GM10248 (cell line): ENCODE measurements at regions of chr9 and their contacts with region 1.

Region 1: GRCh38 chr9:36008774-36009300 is 27.9 kb upstream of the RECK start:
- DNase-seq: peak; percentile 75
- CTCF ChIP-seq: peak; percentile 98

Region 2: DNA sequence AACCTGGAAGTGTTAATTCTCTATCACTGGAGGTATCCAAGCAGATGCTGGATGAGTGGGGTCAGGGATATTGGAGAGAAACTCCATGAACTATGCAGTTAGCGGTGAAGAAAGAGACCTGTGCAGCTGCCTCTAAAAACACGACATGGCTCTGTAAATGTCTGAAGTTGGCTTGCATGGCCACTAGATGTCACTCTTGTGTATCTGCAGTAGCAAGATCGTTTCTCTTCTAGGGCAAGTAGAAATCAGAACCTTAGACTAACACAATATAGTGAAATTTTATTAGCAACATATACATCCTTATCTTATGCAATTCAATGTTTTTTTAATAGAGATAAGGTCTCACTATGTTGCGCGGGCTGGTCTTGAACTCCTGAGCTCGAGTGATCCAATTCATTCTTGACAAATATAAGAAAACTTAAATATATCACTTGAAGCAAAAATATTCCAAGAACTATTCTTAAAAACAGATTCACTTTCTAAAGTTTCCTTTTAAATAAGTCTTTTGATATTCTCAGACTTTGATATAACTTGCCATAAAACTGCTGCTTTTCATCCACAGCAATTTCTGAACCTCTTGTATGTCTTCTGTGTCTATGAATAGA is 53.8 kb before region 1 on chr9:
- CTCF ChIA-PET with region 1: interaction called, 19 read pairs
- POLR2A ChIA-PET with region 1: no interaction called
- DNase-seq: peak; percentile 71
- CTCF ChIP-seq: peak; percentile 80

Region 3: GRCh38 chr9:35976726-35977125 is 32.1 kb before region 1 on chr9:
- CTCF ChIA-PET with region 1: interaction called, 10 read pairs
- POLR2A ChIA-PET with region 1: no interaction called
- DNase-seq: peak; percentile 58
- CTCF ChIP-seq: no peak

Region 4: DNA sequence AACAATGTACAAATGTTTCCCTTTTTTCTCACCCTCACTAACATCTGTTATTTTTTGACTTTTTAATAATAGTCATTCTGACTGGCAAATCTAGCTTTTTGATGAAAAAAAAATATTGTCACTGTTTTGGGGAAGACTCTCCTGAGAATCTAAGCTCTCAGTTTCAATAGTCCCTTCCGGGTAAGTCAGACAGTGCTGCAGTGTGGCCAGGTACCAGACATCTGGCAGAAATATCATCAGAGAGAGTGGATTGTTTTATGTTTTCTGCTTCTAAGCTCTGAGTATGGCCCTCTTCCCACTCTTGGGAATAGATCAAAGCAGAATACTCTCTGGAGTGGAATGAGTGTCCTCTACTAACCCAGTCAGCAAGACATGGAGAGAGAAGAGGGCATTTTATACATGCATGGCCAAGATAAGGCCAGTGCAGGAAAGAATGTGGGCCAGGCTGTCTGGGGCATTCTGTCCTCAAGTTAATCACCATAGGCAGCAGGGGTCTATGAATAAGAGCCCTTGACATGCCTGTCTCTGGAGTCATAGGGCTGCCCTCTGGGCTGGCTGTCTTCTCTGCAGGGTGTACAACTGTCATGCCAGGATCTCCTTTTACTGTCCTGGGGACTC is 12.4 kb before region 1 on chr9:
- CTCF ChIA-PET with region 1: interaction called, 41 read pairs
- POLR2A ChIA-PET with region 1: no interaction called
- DNase-seq: no peak
- CTCF ChIP-seq: no peak

Region 5: DNA sequence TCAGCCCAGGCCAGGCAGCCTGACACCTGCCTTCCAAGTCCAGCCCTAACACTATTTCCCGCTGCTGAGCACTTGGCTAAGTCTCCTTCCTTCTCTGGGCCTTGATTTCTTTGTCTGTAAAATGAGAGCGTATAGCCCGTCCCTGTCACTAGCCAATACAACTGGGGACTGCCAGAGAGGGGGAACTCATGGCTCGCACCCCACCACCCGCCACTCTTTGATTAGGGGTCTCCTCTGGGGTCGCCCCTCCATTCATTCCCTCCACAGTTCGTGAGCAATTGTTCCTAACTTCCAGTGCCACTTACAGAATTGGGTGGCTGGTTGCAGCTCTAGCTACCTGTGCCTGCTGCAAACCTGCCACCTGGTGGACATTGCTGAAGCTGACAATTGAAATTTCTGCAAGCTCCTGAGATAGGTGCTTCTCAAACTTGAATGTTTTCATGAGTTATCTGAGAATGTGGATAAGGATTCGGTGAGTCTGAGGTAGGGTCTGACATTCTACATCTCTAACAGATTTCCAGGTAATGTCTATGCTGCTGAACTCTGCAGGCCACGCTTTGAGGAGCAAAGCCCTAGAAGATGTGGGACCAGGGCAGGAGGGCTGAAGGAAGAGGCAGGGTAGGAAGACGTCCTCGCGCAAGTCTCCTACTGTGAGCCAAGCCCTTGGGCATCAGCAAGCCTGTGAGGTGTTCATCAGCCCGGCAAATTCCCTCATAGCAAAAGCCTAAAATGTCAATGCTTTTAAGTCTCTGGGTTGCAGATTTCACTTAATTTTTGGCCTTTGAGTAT is 14.6 kb after region 1 on chr9:
- CTCF ChIA-PET with region 1: interaction called, 167 read pairs
- POLR2A ChIA-PET with region 1: no interaction called
- DNase-seq: peak; percentile 72
- CTCF ChIP-seq: peak; percentile 84

Region 6: GRCh38 chr9:36029765-36030528 is 21.1 kb after region 1 on chr9:
- CTCF ChIA-PET with region 1: interaction called, 167 read pairs
- POLR2A ChIA-PET with region 1: no interaction called
- DNase-seq: no peak
- CTCF ChIP-seq: no peak

Region 7: DNA sequence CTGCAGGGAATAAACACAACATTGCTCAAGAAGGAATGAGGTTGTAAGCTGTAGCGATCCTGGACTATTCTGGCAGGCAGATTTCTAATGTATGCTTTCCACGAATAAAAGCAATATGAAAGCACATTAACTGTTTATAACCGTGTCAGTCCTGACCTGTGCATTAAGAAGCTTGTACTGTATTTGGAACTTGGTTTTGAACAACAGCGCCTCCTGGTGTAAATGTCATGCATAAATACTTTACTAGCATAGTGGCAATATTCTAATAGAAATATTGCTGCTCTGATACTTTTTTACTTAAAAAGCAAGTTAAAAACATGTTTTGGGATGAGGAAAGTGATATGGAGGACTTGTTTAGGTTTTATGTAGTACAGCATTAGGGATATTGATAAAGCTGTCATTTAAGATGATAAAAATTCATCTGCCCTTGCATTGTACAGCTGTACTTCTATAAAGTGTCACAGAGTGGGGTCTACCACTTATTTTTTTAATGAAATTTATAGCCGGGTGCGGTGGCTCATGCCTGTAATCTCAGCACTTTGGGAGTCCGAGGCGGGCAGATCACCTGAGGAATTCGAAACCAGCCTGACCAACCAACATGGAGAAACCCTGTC is 320.1 kb after region 1 on chr9:
- CTCF ChIA-PET with region 1: interaction called, 12 read pairs
- POLR2A ChIA-PET with region 1: no interaction called
- DNase-seq: peak; percentile 69
- CTCF ChIP-seq: peak; percentile 63